Calu3 (cell line): ENCODE measurements at regions of chr14 and their contacts with region 1.

Region 1: GRCh38 chr14:61296719-61297502 is 15.8 kb upstream of the TMEM30B start:
- DNase-seq: peak; percentile 25
- H3K4me3 Mint-ChIP-seq: no peak overlapping the region
- H3K27ac Mint-ChIP-seq: no peak overlapping the region
- H3K4me1 Mint-ChIP-seq: peaks cover 9% of the 10 kb centered on the region
- H3K27me3 Mint-ChIP-seq: no peaks in the 10 kb centered on the region
- CTCF ChIP-seq: peak; percentile 29

Region 2: DNA sequence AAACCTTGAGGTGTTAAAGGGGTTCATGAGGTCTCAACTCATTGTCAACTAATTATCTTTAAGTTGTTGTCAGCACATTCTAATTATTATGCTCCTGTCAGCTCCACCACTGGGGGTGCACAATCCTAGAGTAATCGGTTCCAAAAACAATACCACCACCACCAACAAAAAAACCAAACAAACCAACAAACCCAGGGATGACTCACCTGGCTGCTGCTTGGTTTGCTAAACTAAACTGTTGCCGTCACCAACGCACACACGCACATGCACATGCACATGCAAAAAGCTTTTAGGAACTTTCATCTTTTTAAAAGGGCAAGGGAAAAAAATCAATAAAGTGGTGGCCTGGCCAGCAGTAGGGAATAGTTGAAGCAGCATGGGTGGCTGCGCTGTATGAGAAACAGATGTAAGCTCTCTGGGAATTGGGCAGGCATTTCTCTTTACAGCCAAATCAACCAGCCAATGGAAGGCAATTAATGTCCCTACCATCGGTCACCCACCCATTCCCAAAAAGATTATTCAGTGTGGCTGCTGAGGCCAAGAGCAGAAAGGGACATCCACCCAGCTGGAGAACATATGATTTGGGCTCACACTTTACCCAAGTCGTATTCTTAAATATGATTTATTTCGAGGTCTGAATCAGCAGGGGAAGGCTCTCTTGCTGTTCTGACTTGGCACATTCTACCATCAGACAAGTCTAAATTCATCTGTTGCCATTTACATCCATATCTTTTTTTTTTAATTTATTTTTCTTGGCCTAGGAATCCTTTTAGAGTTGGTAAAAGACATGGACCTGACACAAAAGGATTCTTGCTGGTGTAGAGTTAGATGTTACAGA is 35.8 kb before region 1 on chr14:
- CTCF ChIA-PET with region 1: no interaction called
- intact Hi-C with region 1: no loop called
- DNase-seq: peak; percentile 58
- H3K4me3 Mint-ChIP-seq: no peak overlapping the region
- H3K27ac Mint-ChIP-seq: no peak overlapping the region
- H3K4me1 Mint-ChIP-seq: peaks cover 7% of the 10 kb centered on the region
- H3K27me3 Mint-ChIP-seq: peaks cover 13% of the 10 kb centered on the region
- CTCF ChIP-seq: no peak

Region 3: DNA sequence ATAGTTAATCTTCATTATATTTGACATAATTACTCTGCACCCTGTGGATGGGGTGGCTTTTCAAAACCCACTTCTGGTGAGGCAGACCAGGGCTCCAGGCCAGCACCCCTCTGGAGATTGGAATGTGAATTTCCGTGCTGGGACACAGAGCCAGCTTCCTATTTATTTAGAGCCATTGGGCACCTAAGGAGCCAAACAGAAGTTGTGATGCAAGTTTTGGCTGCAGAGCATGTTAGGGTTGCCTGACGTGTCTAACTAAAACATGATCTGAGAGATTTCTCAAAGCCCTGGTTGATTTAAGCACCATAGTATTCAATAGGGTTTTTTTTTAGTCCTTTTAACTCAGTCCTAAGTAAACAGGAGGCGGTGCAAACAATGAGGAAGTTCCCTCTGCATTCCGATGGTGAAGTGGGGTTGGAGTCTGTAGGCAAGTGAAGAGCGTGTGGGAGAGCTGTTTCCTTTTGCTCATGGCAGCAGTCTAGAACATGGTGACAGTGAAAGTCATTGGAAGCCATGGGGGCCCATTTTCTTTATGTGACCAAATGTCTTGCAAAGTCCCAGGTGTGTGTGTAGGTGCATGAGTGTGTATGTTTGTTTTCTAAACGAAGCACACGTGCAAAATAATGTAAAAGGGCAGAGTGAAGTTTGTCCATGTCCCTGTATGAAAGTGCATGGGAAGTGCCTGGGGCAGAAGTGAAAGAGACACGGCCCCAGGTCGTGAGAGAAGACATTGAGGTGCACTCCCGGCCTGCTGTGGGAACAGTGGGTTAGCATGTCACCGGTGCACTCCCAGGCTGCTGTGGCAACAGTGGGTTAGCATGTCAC is 142.2 kb after region 1 on chr14:
- CTCF ChIA-PET with region 1: no interaction called
- intact Hi-C with region 1: loop called (anchors 2 kb)
- DNase-seq: peak; percentile 57
- H3K4me3 Mint-ChIP-seq: peak overlapping the region; percentile 62
- H3K27ac Mint-ChIP-seq: peak overlapping the region; percentile 29
- H3K4me1 Mint-ChIP-seq: peaks cover 15% of the 10 kb centered on the region
- H3K27me3 Mint-ChIP-seq: no peaks in the 10 kb centered on the region
- CTCF ChIP-seq: no peak

Region 4: DNA sequence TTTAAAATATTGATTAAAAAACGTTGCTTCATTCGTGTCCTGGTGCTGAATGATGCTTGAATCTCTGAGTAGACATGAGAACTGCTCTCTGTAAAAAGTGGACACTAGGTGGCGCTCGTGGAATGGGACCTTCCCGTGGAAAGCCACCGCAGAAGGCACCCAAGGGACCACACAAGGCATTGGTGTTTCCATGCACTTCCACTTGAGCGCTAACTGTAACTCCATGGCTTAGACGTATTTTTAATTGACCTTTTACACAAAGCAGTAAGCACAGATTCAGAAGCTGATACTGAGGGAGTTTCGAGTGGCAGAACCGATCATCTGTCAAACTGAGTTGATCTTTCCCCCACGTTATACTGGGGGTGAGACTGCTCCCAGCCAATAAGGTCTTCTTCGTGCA is 159.8 kb after region 1 on chr14:
- CTCF ChIA-PET with region 1: no interaction called
- intact Hi-C with region 1: loop called (anchors 2 kb)
- DNase-seq: peak; percentile 85
- H3K4me3 Mint-ChIP-seq: no peak overlapping the region
- H3K27ac Mint-ChIP-seq: no peak overlapping the region
- H3K4me1 Mint-ChIP-seq: peaks cover 6% of the 10 kb centered on the region
- H3K27me3 Mint-ChIP-seq: no peaks in the 10 kb centered on the region
- CTCF ChIP-seq: peak; percentile 71